PC-9 (cell line): ENCODE measurements at regions of chr1 and their contacts with region 1.

Region 1: GRCh38 chr1:109263597-109264398 is 14.5 kb downstream of the CELSR2 start:
- DNase-seq: peak; percentile 96 to 97
- H3K4me3 ChIP-seq: no peak overlapping the region
- H3K27ac ChIP-seq: no peak overlapping the region
- H3K4me1 ChIP-seq: peaks cover 10% of the 10 kb centered on the region
- H3K27me3 ChIP-seq: no peaks in the 10 kb centered on the region
- CTCF ChIP-seq: peak; percentile 100

Region 2: GRCh38 chr1:109041621-109042468 is 222.0 kb before region 1 on chr1 and contains the start of gene WDR47:
- CTCF ChIA-PET with region 1: no interaction called
- POLR2A ChIA-PET with region 1: no interaction called
- intact Hi-C with region 1: loop called (anchors 5 kb)
- DNase-seq: peak; percentile 93 to 94
- H3K4me3 ChIP-seq: peak within 1 kb of the TSS; percentile 76
- H3K27ac ChIP-seq: no peak within 1 kb of the TSS
- H3K4me1 ChIP-seq: peaks cover 16% of the 10 kb centered on the region
- H3K27me3 ChIP-seq: no peaks in the 10 kb centered on the region
- CTCF ChIP-seq: no peak
- total RNA-seq, gene WDR47: 6.4 and 8.3 TPM in 2 replicates

Region 3: GRCh38 chr1:109112652-109113285 is 151.0 kb before region 1 on chr1:
- CTCF ChIA-PET with region 1: interaction called, 4 read pairs
- POLR2A ChIA-PET with region 1: no interaction called
- intact Hi-C with region 1: loop called (anchors 1 kb)
- DNase-seq: peak; percentile 79 to 90
- H3K4me3 ChIP-seq: no peak overlapping the region; the same call in 1 of the 2 replicates
- H3K27ac ChIP-seq: no peak overlapping the region
- H3K4me1 ChIP-seq: 0 out of 2 replicates have a peak, but pooled peaks cover 3% of the 10 kb centered on the region
- H3K27me3 ChIP-seq: no peaks in the 10 kb centered on the region
- CTCF ChIP-seq: peak; percentile 100

Region 4: DNA sequence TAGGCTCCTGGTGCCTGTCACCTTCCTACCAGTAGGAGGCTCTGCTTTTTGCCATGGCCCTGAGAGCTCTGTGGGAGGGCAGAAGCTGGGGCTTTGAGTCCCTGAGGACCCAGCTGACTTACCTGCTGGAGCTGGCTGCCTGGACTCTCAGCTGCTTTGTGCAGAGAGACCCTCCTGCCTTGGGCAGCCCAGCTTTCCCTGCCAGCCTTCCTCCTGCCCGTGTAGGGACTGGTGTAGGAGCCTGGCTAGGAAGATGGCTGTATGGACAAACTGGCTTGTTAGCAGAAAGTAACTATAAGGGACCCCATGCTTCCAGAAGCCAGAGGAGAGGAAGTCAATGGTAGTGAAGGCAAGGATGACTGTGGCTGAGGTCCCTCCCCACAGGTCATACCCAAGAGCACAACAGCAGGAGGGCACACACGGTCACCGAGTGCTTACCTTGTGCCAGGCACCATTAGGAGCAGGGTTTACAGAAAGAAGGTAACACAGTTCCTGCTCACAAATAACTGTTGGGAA is 24.2 kb before region 1 on chr1:
- CTCF ChIA-PET with region 1: no interaction called
- POLR2A ChIA-PET with region 1: no interaction called
- intact Hi-C with region 1: loop called (anchors 1 kb)
- DNase-seq: peak; percentile 36 to 66
- H3K4me3 ChIP-seq: no peak overlapping the region
- H3K27ac ChIP-seq: peak overlapping the region; percentile 92
- H3K4me1 ChIP-seq: peaks cover 38% of the 10 kb centered on the region
- H3K27me3 ChIP-seq: no peaks in the 10 kb centered on the region
- CTCF ChIP-seq: peak; percentile 80

Region 5: GRCh38 chr1:109397538-109398342 is 133.9 kb after region 1 on chr1 and contains the start of gene SORT1:
- CTCF ChIA-PET with region 1: interaction called, 5 read pairs
- POLR2A ChIA-PET with region 1: no interaction called
- intact Hi-C with region 1: loop called (anchors 1 kb)
- DNase-seq: peak; percentile 75 to 83
- H3K4me3 ChIP-seq: peak within 1 kb of the TSS; percentile 69
- H3K27ac ChIP-seq: no peak within 1 kb of the TSS
- H3K4me1 ChIP-seq: peaks cover 38% of the 10 kb centered on the region
- H3K27me3 ChIP-seq: no peaks in the 10 kb centered on the region
- CTCF ChIP-seq: peak; percentile 27; the same call in 1 of the 2 replicates
- total RNA-seq, gene SORT1: 25.7 and 27.9 TPM in 2 replicates

Region 6: GRCh38 chr1:109499661-109500536 is 236.1 kb after region 1 on chr1:
- CTCF ChIA-PET with region 1: no interaction called
- POLR2A ChIA-PET with region 1: interaction called, 15 read pairs
- intact Hi-C with region 1: no loop called
- DNase-seq: peak; percentile 51 to 69
- H3K4me3 ChIP-seq: no peak overlapping the region
- H3K27ac ChIP-seq: no peak overlapping the region
- H3K4me1 ChIP-seq: peaks cover 17% of the 10 kb centered on the region
- H3K27me3 ChIP-seq: no peaks in the 10 kb centered on the region
- CTCF ChIP-seq: peak; percentile 86